MCF 10A (cell line): ENCODE measurements at regions of chr11 and their contacts with region 1.

Region 1: GRCh38 chr11:66268283-66268951 is at the start of gene RAB1B:
- DNase-seq: peak; percentile 100
- H3K4me3 Mint-ChIP-seq: peak within 1 kb of the TSS; percentile 96
- H3K27ac Mint-ChIP-seq: peak within 1 kb of the TSS; percentile 91
- H3K4me1 Mint-ChIP-seq: peaks cover 2% of the 10 kb centered on the region
- H3K27me3 Mint-ChIP-seq: no peaks in the 10 kb centered on the region
- CTCF ChIP-seq: no peak
- total RNA-seq, gene RAB1B: 73.4 and 87.0 TPM in 2 replicates

Region 2: GRCh38 chr11:66282468-66283386 is 14.3 kb after region 1 on chr11:
- CTCF ChIA-PET with region 1: interaction called, 24 read pairs
- POLR2A ChIA-PET with region 1: interaction called, 9 read pairs
- intact Hi-C with region 1: no loop called
- DNase-seq: peak; percentile 89
- H3K4me3 Mint-ChIP-seq: no peak overlapping the region
- H3K27ac Mint-ChIP-seq: no peak overlapping the region
- H3K4me1 Mint-ChIP-seq: no peaks in the 10 kb centered on the region
- H3K27me3 Mint-ChIP-seq: peaks cover 10% of the 10 kb centered on the region
- CTCF ChIP-seq: peak; percentile 94